CD8-positive, alpha-beta memory T cell (primary cell): ENCODE measurements at regions of chr1 and their contacts with region 1.

Region 1: GRCh38 chr1:30718636-30719405 is 4.6 kb downstream of the MATN1 start:
- DNase-seq: peak; percentile 73 to 96 (median 89)
- H3K4me3 ChIP-seq: peak overlapping the region; percentile 88
- H3K4me3 Mint-ChIP-seq: peak overlapping the region; percentile 79 to 93 (median 89)
- H3K27ac ChIP-seq: peak overlapping the region; percentile 100
- H3K27ac Mint-ChIP-seq: peak overlapping the region; percentile 88 to 99 (median 96)
- H3K4me1 ChIP-seq: peaks cover 26% of the 10 kb centered on the region
- H3K4me1 Mint-ChIP-seq: peaks cover 21 to 48% (median 27%) of the 10 kb centered on the region in 3 donors
- H3K27me3 ChIP-seq: no peaks in the 10 kb centered on the region
- H3K27me3 Mint-ChIP-seq: no peaks in the 10 kb centered on the region

Region 2: DNA sequence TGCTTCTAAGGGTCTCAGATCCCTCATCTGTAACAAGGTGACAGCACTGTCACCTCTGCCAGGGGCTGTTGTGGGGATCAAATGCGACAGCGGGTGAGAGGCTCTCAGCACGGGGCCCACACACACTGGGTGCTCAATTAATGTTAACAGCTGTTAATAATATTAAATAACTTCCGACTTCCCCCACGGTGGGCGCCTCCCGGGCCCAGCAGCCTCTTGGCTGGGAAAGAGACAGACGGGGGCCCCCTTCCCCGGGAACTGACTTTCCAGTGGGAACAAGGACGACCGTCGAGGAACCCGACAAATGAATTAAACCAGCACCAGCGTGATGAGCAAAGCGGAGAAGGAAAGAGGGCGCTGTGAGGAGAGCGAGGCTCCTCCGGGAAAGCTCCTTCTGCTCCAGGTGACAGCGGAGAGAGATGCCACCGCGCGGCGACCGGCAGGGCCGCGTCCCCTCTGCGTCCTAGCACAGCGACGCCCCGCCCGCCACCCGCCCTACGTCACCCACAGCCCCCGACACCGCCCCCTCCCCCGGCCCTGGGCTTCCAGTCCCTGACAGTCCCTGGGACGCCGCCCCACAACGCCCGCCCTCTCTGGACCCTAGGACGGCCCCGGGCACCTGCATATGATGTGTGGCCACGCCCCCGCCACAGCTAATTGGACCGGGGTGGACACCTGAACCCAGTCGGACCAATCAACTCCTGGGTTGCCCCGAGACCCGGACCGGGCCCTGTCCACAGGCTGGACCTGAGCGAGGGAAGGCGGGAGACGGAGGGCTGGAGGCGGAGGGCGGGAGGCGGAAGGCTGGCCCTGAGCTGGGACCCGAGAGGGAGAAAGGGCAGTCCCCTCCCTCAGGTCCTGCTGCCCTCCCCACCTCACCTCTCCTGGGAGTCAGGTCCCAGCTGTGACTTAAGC is 33.7 kb before region 1 on chr1:
- CTCF ChIA-PET with region 1: no interaction called
- POLR2A ChIA-PET with region 1: no interaction called
- DNase-seq: peak in 3 of 5 donors; percentile 7 to 59 (median 30)
- H3K4me3 ChIP-seq: peak overlapping the region; percentile 22
- H3K4me3 Mint-ChIP-seq: peak overlapping the region in 6 of 7 donors; percentile 43 to 82 (median 58)
- H3K27ac ChIP-seq: no peak overlapping the region
- H3K27ac Mint-ChIP-seq: no peak overlapping the region
- H3K4me1 ChIP-seq: peaks cover 8% of the 10 kb centered on the region
- H3K4me1 Mint-ChIP-seq: peaks cover 4 to 11% (median 4%) of the 10 kb centered on the region in 3 donors
- H3K27me3 ChIP-seq: peaks cover 12% of the 10 kb centered on the region
- H3K27me3 Mint-ChIP-seq: peaks cover 22 to 68% of the 10 kb centered on the region in 2 donors

Region 3: GRCh38 chr1:30732277-30732996 is 13.6 kb after region 1 on chr1:
- CTCF ChIA-PET with region 1: interaction called, 19 read pairs
- POLR2A ChIA-PET with region 1: interaction called, 9 read pairs
- DNase-seq: no peak
- H3K4me3 ChIP-seq: no peak overlapping the region
- H3K4me3 Mint-ChIP-seq: no peak overlapping the region
- H3K27ac ChIP-seq: no peak overlapping the region
- H3K27ac Mint-ChIP-seq: peak overlapping the region in 6 of 8 donors; percentile 61 to 84 (median 68)
- H3K4me1 ChIP-seq: peaks cover 23% of the 10 kb centered on the region
- H3K4me1 Mint-ChIP-seq: peaks cover 16 to 43% (median 22%) of the 10 kb centered on the region in 3 donors
- H3K27me3 ChIP-seq: no peaks in the 10 kb centered on the region
- H3K27me3 Mint-ChIP-seq: no peaks in the 10 kb centered on the region

Region 4: DNA sequence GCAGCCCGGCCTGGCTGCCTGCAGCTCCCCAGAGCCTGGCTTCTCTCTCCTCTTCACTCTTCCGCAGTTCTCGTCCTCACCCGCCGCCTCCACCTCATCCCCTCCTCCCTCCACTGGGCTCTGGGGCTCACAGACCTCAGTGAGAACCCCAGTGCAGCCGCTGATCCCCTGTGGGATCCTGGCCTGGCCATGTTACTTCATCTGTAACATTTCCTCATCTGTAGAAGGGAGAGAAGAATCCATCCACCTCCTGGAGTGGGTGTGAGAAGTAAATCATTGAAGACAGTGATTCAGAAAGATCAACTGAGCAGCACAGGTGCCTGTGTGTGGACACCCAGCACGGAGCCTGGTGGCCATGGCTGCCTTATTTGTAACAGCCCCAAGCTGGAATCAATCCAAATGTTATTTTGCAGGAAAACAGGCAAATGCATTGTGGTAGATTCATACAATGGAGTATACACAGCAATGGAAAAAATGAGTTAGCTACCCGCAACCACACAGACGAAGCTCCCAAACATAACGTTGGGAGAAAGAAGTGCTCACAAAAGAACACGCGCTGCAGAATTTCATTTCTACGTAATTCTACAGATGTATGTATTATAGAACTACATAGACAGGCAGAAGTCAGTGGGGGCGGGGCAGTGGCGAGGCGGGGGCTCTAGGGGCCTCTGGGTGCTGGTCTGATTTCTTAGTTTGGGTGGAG is 30.0 kb after region 1 on chr1:
- CTCF ChIA-PET with region 1: interaction called, 76 read pairs
- POLR2A ChIA-PET with region 1: interaction called, 25 read pairs
- DNase-seq: no peak
- H3K4me3 ChIP-seq: peak overlapping the region; percentile 53
- H3K4me3 Mint-ChIP-seq: peak overlapping the region; percentile 80 to 100 (median 85)
- H3K27ac ChIP-seq: peak overlapping the region; percentile 53
- H3K27ac Mint-ChIP-seq: peak overlapping the region; percentile 92 to 100 (median 100)
- H3K4me1 ChIP-seq: peaks cover 98% of the 10 kb centered on the region
- H3K4me1 Mint-ChIP-seq: peaks cover 97 to 100% (median 100%) of the 10 kb centered on the region in 3 donors
- H3K27me3 ChIP-seq: no peaks in the 10 kb centered on the region
- H3K27me3 Mint-ChIP-seq: peaks cover 0 to 12% of the 10 kb centered on the region in 2 donors

Region 5: DNA sequence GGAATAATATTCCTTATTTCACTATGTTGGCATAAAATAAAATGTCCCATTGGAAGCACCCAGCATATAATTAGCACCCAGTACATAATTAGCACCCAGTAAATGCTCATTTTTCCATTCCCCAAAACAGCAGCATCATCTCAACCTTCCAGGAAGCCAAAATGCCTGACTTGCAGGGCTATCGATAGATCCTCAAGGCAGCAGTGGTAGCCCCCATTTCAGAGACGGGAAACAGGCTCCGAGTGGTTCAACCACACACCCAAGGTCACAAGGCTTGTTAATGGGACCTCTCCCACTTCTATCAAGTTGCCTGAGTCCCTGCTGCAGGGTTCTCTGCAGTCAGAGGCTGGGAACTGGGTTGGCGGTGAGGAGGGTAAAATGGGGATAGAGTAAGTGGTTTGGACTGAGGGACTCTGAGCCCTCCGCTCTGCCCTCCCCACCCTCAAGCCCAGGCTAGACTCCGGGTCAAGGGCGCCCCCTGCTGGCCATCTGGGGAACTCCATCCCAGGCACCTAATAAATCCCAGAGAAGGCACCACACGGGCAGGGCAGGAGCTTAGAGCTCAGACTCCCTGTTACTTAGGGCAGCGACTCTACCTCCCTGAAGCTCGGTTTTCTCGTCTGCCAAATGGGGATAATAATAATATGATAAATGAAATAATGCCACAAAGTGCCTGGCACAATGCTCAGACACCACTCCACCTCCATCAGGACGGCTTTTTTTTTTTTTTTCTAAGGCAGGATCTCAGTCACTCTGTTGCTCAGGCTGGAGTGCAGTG is 60.7 kb after region 1 on chr1:
- CTCF ChIA-PET with region 1: interaction called, 525 read pairs
- POLR2A ChIA-PET with region 1: interaction called, 24 read pairs
- DNase-seq: peak; percentile 82 to 93 (median 91)
- H3K4me3 ChIP-seq: peak overlapping the region; percentile 33
- H3K4me3 Mint-ChIP-seq: peak overlapping the region in 5 of 7 donors; percentile 19 to 49 (median 23)
- H3K27ac ChIP-seq: peak overlapping the region; percentile 78
- H3K27ac Mint-ChIP-seq: peak overlapping the region in 7 of 8 donors; percentile 3 to 81 (median 36)
- H3K4me1 ChIP-seq: peaks cover 19% of the 10 kb centered on the region
- H3K4me1 Mint-ChIP-seq: peaks cover 15 to 29% (median 18%) of the 10 kb centered on the region in 3 donors
- H3K27me3 ChIP-seq: no peaks in the 10 kb centered on the region
- H3K27me3 Mint-ChIP-seq: no peaks in the 10 kb centered on the region

Region 6: DNA sequence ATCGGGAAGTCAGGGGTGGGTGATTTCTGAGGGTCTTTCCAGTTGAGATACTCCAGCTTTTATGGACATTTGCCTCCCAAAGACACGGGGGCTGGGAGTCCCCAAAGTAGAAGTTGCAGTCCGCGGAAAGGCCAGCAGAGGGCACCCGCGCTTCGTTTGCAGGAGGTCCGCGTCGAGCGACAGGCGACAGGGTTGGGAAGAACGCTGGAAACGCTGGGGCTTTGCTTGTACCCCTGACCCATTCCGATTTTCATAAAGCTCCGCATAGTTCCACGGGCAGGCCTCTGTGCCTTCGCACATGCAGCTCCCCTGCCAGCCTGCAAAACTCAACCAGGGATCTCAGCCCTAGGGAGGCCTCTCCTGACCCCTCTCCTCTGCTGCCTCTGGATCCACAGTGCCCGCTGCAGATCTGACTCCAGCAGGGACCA is 83.0 kb after region 1 on chr1:
- CTCF ChIA-PET with region 1: interaction called, 21 read pairs
- POLR2A ChIA-PET with region 1: no interaction called
- DNase-seq: peak; percentile 58 to 83 (median 72)
- H3K4me3 ChIP-seq: no peak overlapping the region
- H3K4me3 Mint-ChIP-seq: no peak overlapping the region
- H3K27ac ChIP-seq: no peak overlapping the region
- H3K27ac Mint-ChIP-seq: peak overlapping the region in 2 of 8 donors; percentile 9 to 39
- H3K4me1 ChIP-seq: no peaks in the 10 kb centered on the region
- H3K4me1 Mint-ChIP-seq: peaks cover 4 to 8% (median 5%) of the 10 kb centered on the region in 3 donors
- H3K27me3 ChIP-seq: peaks cover 12% of the 10 kb centered on the region
- H3K27me3 Mint-ChIP-seq: peaks cover 10 to 34% of the 10 kb centered on the region in 2 donors